Left colon (tissue), 2 donors: ENCODE measurements at regions of chr2 and their contacts with region 1.

Region 1: DNA sequence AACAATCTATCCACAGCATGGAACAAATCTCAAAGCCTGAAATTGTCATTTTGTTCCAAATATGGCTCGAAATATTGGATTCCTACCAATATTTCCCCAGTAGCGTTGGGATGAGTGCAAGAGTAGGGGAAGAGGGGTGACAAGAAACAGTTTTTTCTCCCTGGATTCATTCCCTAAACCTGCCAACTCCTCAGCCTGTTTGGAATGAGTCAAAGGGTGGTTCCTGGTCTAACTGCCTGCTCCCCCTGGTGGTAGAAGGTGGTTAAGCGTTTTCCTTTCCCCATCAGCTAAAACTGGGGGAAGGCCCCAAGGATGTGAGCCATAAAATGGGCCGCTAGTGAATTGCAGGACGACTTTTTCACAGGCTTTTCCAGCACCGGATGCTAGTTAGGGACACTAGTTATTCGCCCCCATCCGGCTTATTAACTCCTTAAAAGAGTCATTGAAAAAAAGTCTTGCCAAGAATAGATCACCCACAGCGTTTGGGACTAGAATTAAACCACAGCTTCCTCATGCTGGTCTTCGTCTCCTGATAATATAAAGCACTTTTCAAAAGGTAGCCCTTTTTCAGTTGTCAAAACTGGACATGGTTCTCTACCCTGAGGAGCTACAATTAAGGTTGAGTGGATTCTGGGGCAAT is 72.5 kb downstream of the DHRS9 start:
- DNase-seq: peak in 1 of 2 donors; percentile 68
- ATAC-seq: peak; percentile 74

Region 2: DNA sequence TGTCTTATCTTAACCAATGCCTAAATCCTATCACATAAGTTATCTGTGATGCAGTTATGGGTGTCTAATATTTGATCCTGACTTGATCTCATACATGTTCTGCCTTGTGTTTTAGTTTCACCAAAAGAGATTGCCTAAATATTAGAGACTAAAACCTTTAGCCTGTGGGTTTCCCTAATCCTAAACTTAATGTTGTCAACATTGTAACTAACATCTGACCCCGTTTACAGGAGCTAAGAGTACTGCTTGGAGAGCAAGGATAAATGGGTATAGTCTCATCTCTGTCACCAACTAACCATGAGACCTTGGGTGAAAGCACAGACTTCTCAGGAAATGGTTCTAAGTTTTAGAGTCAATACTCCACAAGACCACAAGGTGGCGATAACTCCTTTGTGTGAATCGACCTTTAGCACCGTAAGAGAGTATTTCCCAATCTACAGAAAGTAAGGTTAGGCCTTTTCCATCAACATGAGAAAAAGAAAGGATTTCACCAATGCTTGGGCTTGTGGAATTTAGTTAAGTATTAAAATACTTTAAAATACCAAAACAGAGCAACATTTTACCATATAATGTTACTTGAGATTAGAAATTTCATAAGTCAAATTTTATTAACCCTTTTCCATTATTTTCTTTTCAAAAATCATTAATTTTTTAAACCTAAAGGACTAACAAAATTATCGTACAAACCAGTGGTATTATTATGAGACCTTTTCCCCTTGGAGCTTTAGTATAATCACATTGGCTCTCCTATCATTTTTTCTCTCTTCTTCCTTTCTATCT is 180.2 kb before region 1 on chr2:
- intact Hi-C with region 1: loop called in 1 of 2 experiments (anchors 5 kb)
- DNase-seq: no peak
- ATAC-seq: peak; percentile 90

Region 3: DNA sequence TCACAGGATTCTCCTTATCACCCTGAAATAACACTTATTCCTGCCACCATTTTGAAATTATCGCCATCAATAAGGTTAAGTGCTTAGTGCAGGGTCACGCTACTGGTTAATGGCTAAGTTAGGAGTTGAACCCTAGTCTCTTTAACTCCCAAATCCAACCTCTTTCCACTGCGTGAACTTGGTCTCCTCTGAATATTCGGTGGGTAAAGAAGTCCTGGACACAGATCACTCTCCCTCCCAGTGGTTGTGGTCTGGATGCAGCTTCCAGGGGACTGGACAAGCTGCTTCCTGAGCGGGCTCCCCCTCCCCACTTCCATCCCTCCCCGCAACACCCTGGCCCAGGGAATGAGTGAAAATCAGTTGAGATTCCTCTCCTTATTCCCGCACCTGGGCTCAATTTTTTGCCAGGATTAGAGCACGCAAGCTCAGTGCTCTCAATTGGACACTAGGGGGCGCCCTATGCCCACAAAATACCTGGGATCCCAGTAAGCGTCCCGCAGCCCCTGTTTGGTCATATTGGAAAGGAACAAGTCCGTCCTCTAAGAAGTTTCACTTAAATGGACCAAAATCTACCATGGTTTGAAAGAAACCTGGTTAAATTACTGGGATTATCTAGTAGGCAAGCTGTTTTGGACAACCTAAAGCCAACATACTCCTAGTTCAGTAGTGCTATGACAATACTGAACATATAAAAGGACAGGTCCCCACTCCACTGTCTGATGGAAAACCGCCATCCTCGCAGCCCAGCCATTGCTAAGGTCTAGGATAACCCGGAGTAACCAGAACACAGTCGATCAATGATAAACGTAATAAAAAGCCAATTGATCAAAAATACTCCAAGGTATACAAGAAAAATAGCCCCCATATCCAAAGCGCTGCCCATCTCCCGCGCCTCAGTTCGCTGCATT is 32.1 kb before region 1 on chr2:
- intact Hi-C with region 1: loop called in 1 of 2 experiments (anchors 5 kb)
- DNase-seq: peak; percentile 60 to 85
- ATAC-seq: peak; percentile 84